ENCODE measurements at regions of chr13 and their contacts with region 1.

Region 1: DNA sequence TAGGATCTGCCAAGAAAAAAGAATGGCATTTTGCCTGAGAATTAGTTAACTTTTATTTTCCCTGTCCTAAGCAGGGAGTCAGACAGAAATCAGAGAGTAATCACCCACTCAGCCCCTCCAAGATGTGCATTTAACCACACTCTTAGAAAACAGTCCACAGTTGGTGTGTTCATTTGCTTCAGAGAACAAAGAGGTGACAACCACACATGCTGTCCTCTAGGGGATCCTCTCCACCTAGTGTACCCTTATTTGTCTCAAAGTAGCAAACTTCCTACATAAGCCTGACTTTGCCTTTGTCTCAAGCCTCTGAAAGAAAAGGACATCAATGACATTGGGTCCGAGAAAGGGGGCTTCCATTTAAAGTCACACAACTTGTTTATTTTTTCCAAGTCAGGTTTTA is 107.0 kb upstream of the RFC3 start:
- DNase-seq: no peak
- ATAC-seq: no peak
- H3K4me3 ChIP-seq: no peak overlapping the region
- H3K27ac ChIP-seq: no peak overlapping the region
- H3K4me1 ChIP-seq: no peaks in the 10 kb centered on the region
- H3K27me3 ChIP-seq: no peaks in the 10 kb centered on the region
- CTCF ChIP-seq: no peak
- POLR2A ChIP-seq: no peak

Region 2: GRCh38 chr13:33554919-33555791 is 155.8 kb before region 1 on chr13:
- intact Hi-C with region 1: loop called (anchors 10 kb)
- DNase-seq: no peak
- ATAC-seq: no peak
- H3K4me3 ChIP-seq: no peak overlapping the region
- H3K27ac ChIP-seq: no peak overlapping the region
- H3K4me1 ChIP-seq: no peaks in the 10 kb centered on the region
- H3K27me3 ChIP-seq: no peaks in the 10 kb centered on the region
- CTCF ChIP-seq: no peak
- POLR2A ChIP-seq: no peak